Transverse colon (tissue), 4 donors: ENCODE measurements at regions of chr9 and their contacts with region 1.

Region 1: GRCh38 chr9:33415501-33416038 is 13.2 kb upstream of the AQP7 start:
- DNase-seq: peak; percentile 91
- H3K4me3 ChIP-seq: no peak overlapping the region
- H3K27ac ChIP-seq: peak overlapping the region in 3 of 4 donors; percentile 33 to 55 (median 54)
- H3K4me1 ChIP-seq: peaks cover 7 to 38% (median 21%) of the 10 kb centered on the region in 4 donors
- H3K27me3 ChIP-seq: no peaks in the 10 kb centered on the region
- CTCF ChIP-seq: peak; percentile 70 to 86 (median 77)
- EP300 ChIP-seq: no peak
- POLR2A ChIP-seq: no peak

Region 2: DNA sequence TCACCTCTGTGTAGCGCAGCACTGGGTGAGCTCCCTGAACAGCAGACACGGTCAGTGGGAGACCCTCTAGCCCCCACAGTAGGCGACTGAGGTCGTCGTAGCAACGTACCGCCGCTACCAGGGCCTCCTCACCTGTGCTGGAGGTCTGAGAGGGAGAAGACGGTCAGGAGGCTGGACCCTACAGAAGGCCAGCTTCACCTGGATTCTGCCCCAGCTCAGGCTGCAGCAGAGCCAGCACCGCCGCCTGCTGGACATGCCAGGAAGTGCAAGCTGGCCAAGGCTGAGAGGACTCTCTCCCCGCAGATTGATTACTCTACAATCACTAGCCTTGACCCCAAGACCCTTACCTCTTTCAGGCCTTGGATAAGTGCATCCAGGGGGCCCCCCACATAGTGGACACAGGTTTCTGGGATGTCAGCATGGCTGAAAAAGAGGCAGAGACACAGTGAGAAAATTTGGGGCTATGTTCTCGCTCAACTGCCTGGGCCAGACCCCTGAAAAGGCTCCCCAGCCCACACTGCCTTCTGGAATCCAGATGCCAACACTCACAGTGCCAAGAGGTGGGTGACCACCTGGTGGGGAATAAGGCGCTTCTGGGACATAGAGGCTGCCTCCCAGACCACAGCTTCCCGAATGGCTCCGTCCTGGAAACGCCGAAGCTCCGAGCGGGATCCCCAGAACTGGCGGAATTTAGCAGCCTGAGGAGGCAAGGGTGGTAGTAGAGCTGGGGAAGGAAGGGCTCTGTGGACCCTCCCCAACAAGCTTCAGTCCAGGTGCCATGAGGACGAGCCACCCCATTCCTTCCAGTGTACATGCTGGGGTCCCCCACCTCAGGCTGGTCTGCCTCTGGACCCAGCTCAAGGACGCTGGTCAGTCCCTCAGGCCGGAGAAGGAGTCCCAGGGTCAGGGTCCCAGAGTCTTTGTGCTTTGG is 51.3 kb after region 1 on chr9:
- in situ Hi-C with region 1: loop called in 1 of 4 experiments (anchors 5 kb)
- intact Hi-C with region 1: no loop called
- DNase-seq: peak; percentile 78
- H3K4me3 ChIP-seq: no peak overlapping the region
- H3K27ac ChIP-seq: no peak overlapping the region
- H3K4me1 ChIP-seq: peaks cover 0 to 2% (median 0%) of the 10 kb centered on the region in 4 donors
- H3K27me3 ChIP-seq: no peaks in the 10 kb centered on the region
- CTCF ChIP-seq: peak; percentile 95 to 98 (median 97)
- EP300 ChIP-seq: no peak
- POLR2A ChIP-seq: no peak